Dendritic cell treated with granulocyte-macrophage colony-stimulating factor and Interleukin-4, amounts not matched to agents 40 ng/mL and 50 ng/mL, for 4 days (primary cell): ENCODE measurements at regions of chr3 and their contacts with region 1.

Region 1: GRCh38 chr3:5731094-5731493 is 543.6 kb downstream of the EDEM1 start:
- H3K4me3 Mint-ChIP-seq: no peak overlapping the region
- H3K27ac Mint-ChIP-seq: no peak overlapping the region
- H3K4me1 Mint-ChIP-seq: peaks cover 16% of the 10 kb centered on the region
- H3K27me3 Mint-ChIP-seq: no peaks in the 10 kb centered on the region

Region 2: GRCh38 chr3:5304789-5305683 is 426.1 kb before region 1 on chr3:
- intact Hi-C with region 1: loop called (anchors 2 kb)
- H3K4me3 Mint-ChIP-seq: no peak overlapping the region
- H3K27ac Mint-ChIP-seq: no peak overlapping the region
- H3K4me1 Mint-ChIP-seq: no peaks in the 10 kb centered on the region
- H3K27me3 Mint-ChIP-seq: no peaks in the 10 kb centered on the region